ENCODE measurements at regions of chr14 and their contacts with region 1.

Region 1: GRCh38 chr14:32576088-32576795 is 247.1 kb downstream of the AKAP6 start:
- DNase-seq: peak; percentile 42
- ATAC-seq: peak; percentile 86
- H3K4me3 ChIP-seq: no peak overlapping the region
- H3K27ac ChIP-seq: no peak overlapping the region
- H3K4me1 ChIP-seq: no peaks in the 10 kb centered on the region
- H3K27me3 ChIP-seq: peaks cover 44% of the 10 kb centered on the region
- CTCF ChIP-seq: peak; percentile 56 to 93 (median 92); a peak in 5 of 6 replicates
- POLR2A ChIP-seq: no peak
- RAD21 ChIP-seq: peak; percentile 81

Region 2: GRCh38 chr14:32998433-32998832 is 422.2 kb after region 1 on chr14:
- CTCF ChIA-PET with region 1: no interaction called
- POLR2A ChIA-PET with region 1: no interaction called
- RAD21 ChIA-PET with region 1: no interaction called
- intact Hi-C with region 1: loop called (anchors 2 kb)
- DNase-seq: no peak
- ATAC-seq: no peak
- H3K4me3 ChIP-seq: no peak overlapping the region
- H3K27ac ChIP-seq: no peak overlapping the region
- H3K4me1 ChIP-seq: no peaks in the 10 kb centered on the region
- H3K27me3 ChIP-seq: no peaks in the 10 kb centered on the region
- CTCF ChIP-seq: peak in 2 of 3 experiments; percentile 24 to 32; a peak in 3 of 6 replicates
- POLR2A ChIP-seq: no peak
- RAD21 ChIP-seq: no peak

Region 3: GRCh38 chr14:33792720-33793368 is 1216.6 kb after region 1 on chr14:
- CTCF ChIA-PET with region 1: interaction called, 5 read pairs
- POLR2A ChIA-PET with region 1: no interaction called
- RAD21 ChIA-PET with region 1: no interaction called
- intact Hi-C with region 1: loop called (anchors 1 kb)
- DNase-seq: peak; percentile 29
- ATAC-seq: peak; percentile 85
- H3K4me3 ChIP-seq: no peak overlapping the region
- H3K27ac ChIP-seq: no peak overlapping the region
- H3K4me1 ChIP-seq: peaks cover 3 to 6% of the 10 kb centered on the region in 2 experiments; a peak in 1 of 4 replicates
- H3K27me3 ChIP-seq: peaks cover 44% of the 10 kb centered on the region
- CTCF ChIP-seq: peak; percentile 44 to 97 (median 86); a peak in 5 of 6 replicates
- POLR2A ChIP-seq: no peak
- RAD21 ChIP-seq: peak; percentile 75

Region 4: GRCh38 chr14:34098045-34098984 is 1522.1 kb after region 1 on chr14:
- CTCF ChIA-PET with region 1: no interaction called
- POLR2A ChIA-PET with region 1: no interaction called
- RAD21 ChIA-PET with region 1: no interaction called
- intact Hi-C with region 1: loop called (anchors 5 kb)
- DNase-seq: peak; percentile 46
- ATAC-seq: peak; percentile 73
- H3K4me3 ChIP-seq: no peak overlapping the region
- H3K27ac ChIP-seq: no peak overlapping the region
- H3K4me1 ChIP-seq: no peaks in the 10 kb centered on the region
- H3K27me3 ChIP-seq: no peaks in the 10 kb centered on the region
- CTCF ChIP-seq: peak; percentile 61 to 91 (median 83)
- POLR2A ChIP-seq: no peak
- RAD21 ChIP-seq: peak; percentile 94

Region 5: GRCh38 chr14:34322940-34323418 is 1746.7 kb after region 1 on chr14:
- CTCF ChIA-PET with region 1: interaction called, 4 read pairs
- POLR2A ChIA-PET with region 1: no interaction called
- RAD21 ChIA-PET with region 1: no interaction called
- intact Hi-C with region 1: loop called (anchors 1 kb)
- DNase-seq: peak; percentile 46
- ATAC-seq: peak; percentile 92
- H3K4me3 ChIP-seq: no peak overlapping the region
- H3K27ac ChIP-seq: no peak overlapping the region
- H3K4me1 ChIP-seq: no peaks in the 10 kb centered on the region
- H3K27me3 ChIP-seq: peaks cover 9% of the 10 kb centered on the region; the same call in 1 of the 2 replicates
- CTCF ChIP-seq: peak; percentile 35 to 92 (median 72); a peak in 5 of 6 replicates
- POLR2A ChIP-seq: no peak
- RAD21 ChIP-seq: peak; percentile 36

Measured in HCT116 (cell line).